Adrenal gland (tissue), 19 donors: ENCODE measurements at regions of chr17 and their contacts with region 1.

Region 1: DNA sequence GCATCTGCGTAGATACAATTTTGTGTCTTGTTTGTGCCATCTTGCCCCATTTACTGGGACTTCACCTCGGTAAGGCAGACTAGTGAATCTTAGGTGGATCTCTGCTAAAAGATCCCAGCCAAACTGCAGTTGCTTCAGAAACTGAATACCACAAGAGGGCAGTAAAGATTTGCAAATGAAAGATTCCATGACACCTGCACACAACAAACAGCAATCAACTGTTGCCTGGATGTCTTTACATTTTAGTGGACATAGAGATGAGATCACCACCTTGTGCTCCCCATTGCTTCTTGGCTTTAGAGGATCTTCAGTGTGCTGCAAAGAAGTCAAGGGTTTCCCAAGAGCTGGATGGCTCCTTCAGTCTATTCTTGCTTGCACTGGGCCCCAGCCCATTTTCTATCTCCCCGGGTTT is 119.2 kb upstream of the CACNG5 start:
- DNase-seq: peak in 3 of 7 donors; percentile 21 to 48 (median 23)
- H3K4me3 ChIP-seq: no peak overlapping the region
- H3K27ac ChIP-seq: no peak overlapping the region
- H3K4me1 ChIP-seq: no peaks in the 10 kb centered on the region
- H3K27me3 ChIP-seq: no peaks in the 10 kb centered on the region
- CTCF ChIP-seq: peak; percentile 61 to 75 (median 67)
- POLR2A ChIP-seq: no peak

Region 2: GRCh38 chr17:66906321-66907278 is 190.8 kb after region 1 on chr17:
- intact Hi-C with region 1: loop called (anchors 5 to 10 kb)
- DNase-seq: peak; percentile 83 to 94 (median 89)
- H3K4me3 ChIP-seq: no peak overlapping the region
- H3K27ac ChIP-seq: no peak overlapping the region
- H3K4me1 ChIP-seq: no peaks in the 10 kb centered on the region
- H3K27me3 ChIP-seq: no peaks in the 10 kb centered on the region
- CTCF ChIP-seq: peak; percentile 80 to 90 (median 87)
- POLR2A ChIP-seq: no peak